A673 (cell line): ENCODE measurements at regions of chrX and their contacts with region 1.

Region 1: GRCh38 chrX:46903458-46904242 is 8.6 kb upstream of the JADE3 start:
- DNase-seq: peak; percentile 92
- H3K4me3 ChIP-seq: peak overlapping the region; percentile 47
- H3K27ac ChIP-seq: peak overlapping the region; percentile 90
- H3K4me1 ChIP-seq: peaks cover 21% of the 10 kb centered on the region
- H3K27me3 ChIP-seq: no peaks in the 10 kb centered on the region
- CTCF ChIP-seq: peak; percentile 74

Region 2: DNA sequence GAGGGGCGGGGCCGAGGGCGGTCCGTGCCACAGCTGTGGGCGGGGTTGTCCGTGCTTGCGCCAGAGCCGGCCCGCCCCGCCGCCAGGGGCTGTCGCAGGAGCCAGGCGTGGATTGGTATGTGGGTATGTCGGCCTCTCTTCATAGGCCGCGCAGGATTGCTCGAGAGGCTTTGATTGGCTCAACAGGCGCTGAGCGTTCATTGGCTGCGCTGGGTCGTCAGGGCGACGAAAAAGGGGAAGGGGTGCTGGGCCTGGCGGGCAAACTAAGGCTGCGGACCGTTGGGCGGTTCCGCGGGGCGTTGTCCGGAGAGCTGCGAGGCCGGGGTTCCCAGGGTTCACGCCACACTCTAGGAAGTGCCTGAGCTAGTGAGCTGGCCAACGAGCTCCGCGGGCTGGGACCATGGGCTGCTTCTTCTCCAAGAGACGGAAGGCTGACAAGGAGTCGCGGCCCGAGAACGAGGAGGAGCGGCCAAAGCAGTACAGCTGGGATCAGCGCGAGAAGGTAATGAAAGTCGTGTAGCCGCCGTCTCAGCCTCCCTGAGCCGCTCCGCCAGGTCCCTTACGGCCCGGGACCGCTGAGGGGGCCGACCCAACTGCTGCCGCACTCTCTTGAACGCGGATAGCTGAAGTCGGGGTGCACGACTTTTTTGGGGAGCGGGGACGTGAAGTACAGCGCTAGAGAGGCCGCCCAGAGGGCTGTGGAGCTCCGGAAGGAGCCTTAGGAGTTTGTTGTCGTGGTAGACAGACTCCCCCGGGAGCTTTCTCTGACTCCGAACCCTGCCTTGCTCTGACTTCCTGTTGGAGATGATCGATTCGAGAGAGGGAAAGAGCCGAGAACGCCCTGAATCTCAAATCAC is 66.7 kb before region 1 on chrX and contains the start of gene RP2:
- CTCF ChIA-PET with region 1: interaction called, 3 read pairs
- POLR2A ChIA-PET with region 1: no interaction called
- intact Hi-C with region 1: loop called (anchors 5 kb)
- DNase-seq: peak; percentile 96
- H3K4me3 ChIP-seq: peak within 1 kb of the TSS; percentile 87
- H3K27ac ChIP-seq: peak within 1 kb of the TSS; percentile 82
- H3K4me1 ChIP-seq: no peaks in the 10 kb centered on the region
- H3K27me3 ChIP-seq: no peaks in the 10 kb centered on the region
- CTCF ChIP-seq: no peak
- total RNA-seq, gene RP2: 21.5 and 24.7 TPM in 2 replicates

Region 3: GRCh38 chrX:46978341-46979291 is 75.0 kb after region 1 on chrX:
- CTCF ChIA-PET with region 1: no interaction called
- POLR2A ChIA-PET with region 1: no interaction called
- intact Hi-C with region 1: loop called (anchors 5 kb)
- DNase-seq: peak; percentile 87
- H3K4me3 ChIP-seq: no peak overlapping the region
- H3K27ac ChIP-seq: peak overlapping the region; percentile 59
- H3K4me1 ChIP-seq: peaks cover 18% of the 10 kb centered on the region
- H3K27me3 ChIP-seq: no peaks in the 10 kb centered on the region
- CTCF ChIP-seq: peak; percentile 84

Region 4: GRCh38 chrX:47030339-47030738 is 126.7 kb after region 1 on chrX:
- CTCF ChIA-PET with region 1: interaction called, 5 read pairs
- POLR2A ChIA-PET with region 1: no interaction called
- intact Hi-C with region 1: loop called (anchors 5 kb)
- DNase-seq: peak; percentile 85
- H3K4me3 ChIP-seq: no peak overlapping the region
- H3K27ac ChIP-seq: no peak overlapping the region
- H3K4me1 ChIP-seq: no peaks in the 10 kb centered on the region
- H3K27me3 ChIP-seq: no peaks in the 10 kb centered on the region
- CTCF ChIP-seq: peak; percentile 76

Region 5: DNA sequence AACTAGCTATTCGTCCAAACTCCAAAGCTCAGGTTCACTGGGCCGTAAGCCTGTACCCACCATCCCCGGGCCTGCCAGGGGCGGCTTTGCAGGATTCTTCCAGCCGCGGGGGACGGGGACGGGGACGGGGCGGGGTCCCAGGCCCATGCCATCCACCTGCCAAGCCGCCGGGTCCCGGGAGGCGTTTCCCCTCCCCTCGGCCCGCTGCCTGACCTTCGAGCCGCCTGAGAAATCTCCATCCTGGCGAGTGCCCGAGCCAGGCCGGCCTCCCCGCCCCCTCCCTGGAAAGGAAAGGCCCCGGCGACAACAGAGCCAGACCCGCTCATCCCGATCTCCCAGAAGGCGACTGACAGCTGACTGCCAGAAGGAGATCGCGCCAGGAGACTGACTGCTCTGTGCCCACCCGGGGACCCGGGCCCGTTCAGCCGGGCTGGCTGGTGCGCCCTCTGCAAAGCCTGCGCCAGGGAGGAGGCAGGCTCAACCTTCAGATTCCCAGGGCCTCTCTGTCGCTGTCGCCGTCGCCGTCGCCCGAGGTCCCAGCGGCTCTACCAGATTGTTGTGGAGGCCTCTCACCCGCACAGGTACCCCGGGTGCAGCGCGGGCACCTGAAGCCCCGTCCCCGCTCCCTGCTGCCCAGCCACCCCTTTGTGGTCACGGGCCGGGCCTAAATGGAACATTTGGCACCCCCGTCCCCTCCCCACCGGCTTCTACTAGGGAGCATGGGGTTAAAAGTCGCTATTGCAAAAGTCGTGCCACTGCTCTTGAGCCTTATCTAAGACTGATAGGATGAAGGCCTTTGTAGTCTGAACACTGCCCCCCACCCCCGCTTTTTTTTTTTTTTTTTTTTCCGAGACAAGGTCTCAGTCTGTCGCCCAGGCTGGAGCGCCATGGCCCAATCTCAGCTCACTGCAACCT is 174.7 kb after region 1 on chrX and contains the start of gene RGN:
- CTCF ChIA-PET with region 1: no interaction called
- POLR2A ChIA-PET with region 1: no interaction called
- intact Hi-C with region 1: loop called (anchors 2 kb)
- DNase-seq: no peak
- H3K4me3 ChIP-seq: no peak within 1 kb of the TSS
- H3K27ac ChIP-seq: no peak within 1 kb of the TSS
- H3K4me1 ChIP-seq: no peaks in the 10 kb centered on the region
- H3K27me3 ChIP-seq: no peaks in the 10 kb centered on the region
- CTCF ChIP-seq: no peak
- total RNA-seq, gene RGN: 1.6 and 1.8 TPM in 2 replicates

Region 6: DNA sequence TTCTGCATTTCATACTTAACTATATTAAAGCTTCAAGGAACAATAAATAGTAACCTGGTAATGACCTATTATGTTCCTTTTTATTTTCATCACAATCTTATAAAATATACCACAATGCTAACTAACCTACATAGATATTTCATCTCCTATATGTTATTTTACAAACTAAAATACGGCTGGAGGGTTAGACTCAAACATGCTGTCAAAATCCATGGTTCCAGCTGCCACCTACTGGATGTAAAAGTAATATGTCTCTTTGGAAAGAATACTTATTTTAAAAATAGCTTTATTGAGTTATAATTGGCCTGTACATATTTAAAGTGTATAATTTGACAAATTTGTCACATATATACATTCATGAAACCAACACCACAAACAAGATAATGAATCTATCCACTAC is 189.6 kb after region 1 on chrX:
- CTCF ChIA-PET with region 1: no interaction called
- POLR2A ChIA-PET with region 1: no interaction called
- intact Hi-C with region 1: loop called (anchors 5 kb)
- DNase-seq: peak; percentile 64
- H3K4me3 ChIP-seq: no peak overlapping the region
- H3K27ac ChIP-seq: no peak overlapping the region
- H3K4me1 ChIP-seq: peaks cover 6% of the 10 kb centered on the region
- H3K27me3 ChIP-seq: peaks cover 3% of the 10 kb centered on the region
- CTCF ChIP-seq: peak; percentile 66